Activated CD8-positive, alpha-beta memory T cell treated with anti-CD3 and anti-CD28 coated beads, Interleukin-2, amount 10 ng/mL, durations not matched to agents 7 days and 5 days (primary cell): ENCODE measurements at regions of chr5 and their contacts with region 1.

Region 1: GRCh38 chr5:137660349-137660817 is 75.5 kb downstream of the KLHL3 start:
- DNase-seq: peak; percentile 81
- ATAC-seq: peak; percentile 89
- H3K4me3 Mint-ChIP-seq: no peak overlapping the region
- H3K27ac Mint-ChIP-seq: no peak overlapping the region
- H3K4me1 Mint-ChIP-seq: peaks cover 5% of the 10 kb centered on the region
- H3K27me3 Mint-ChIP-seq: no peaks in the 10 kb centered on the region

Region 2: GRCh38 chr5:137629646-137630045 is 30.7 kb before region 1 on chr5:
- CTCF ChIA-PET with region 1: interaction called, 17 read pairs
- DNase-seq: no peak
- ATAC-seq: peak; percentile 69
- H3K4me3 Mint-ChIP-seq: no peak overlapping the region
- H3K27ac Mint-ChIP-seq: no peak overlapping the region
- H3K4me1 Mint-ChIP-seq: no peaks in the 10 kb centered on the region
- H3K27me3 Mint-ChIP-seq: no peaks in the 10 kb centered on the region

Region 3: GRCh38 chr5:137649228-137649935 is 11.0 kb before region 1 on chr5:
- CTCF ChIA-PET with region 1: no interaction called
- DNase-seq: no peak
- ATAC-seq: no peak
- H3K4me3 Mint-ChIP-seq: no peak overlapping the region
- H3K27ac Mint-ChIP-seq: no peak overlapping the region
- H3K4me1 Mint-ChIP-seq: no peaks in the 10 kb centered on the region
- H3K27me3 Mint-ChIP-seq: no peaks in the 10 kb centered on the region

Region 4: GRCh38 chr5:137695651-137696428 is 35.5 kb after region 1 on chr5:
- CTCF ChIA-PET with region 1: interaction called, 47 read pairs
- DNase-seq: no peak
- ATAC-seq: peak; percentile 48
- H3K4me3 Mint-ChIP-seq: peak overlapping the region; percentile 11
- H3K27ac Mint-ChIP-seq: peak overlapping the region; percentile 84
- H3K4me1 Mint-ChIP-seq: peaks cover 26% of the 10 kb centered on the region
- H3K27me3 Mint-ChIP-seq: no peaks in the 10 kb centered on the region

Region 5: GRCh38 chr5:137735555-137736284 is 75.3 kb after region 1 on chr5 and contains the start of gene KLHL3:
- CTCF ChIA-PET with region 1: interaction called, 163 read pairs
- DNase-seq: peak; percentile 61
- ATAC-seq: peak; percentile 63
- H3K4me3 Mint-ChIP-seq: no peak within 1 kb of the TSS
- H3K27ac Mint-ChIP-seq: no peak within 1 kb of the TSS
- H3K4me1 Mint-ChIP-seq: peaks cover 6% of the 10 kb centered on the region
- H3K27me3 Mint-ChIP-seq: no peaks in the 10 kb centered on the region
- total RNA-seq, gene KLHL3: 3.0 to 5.7 TPM

Region 6: DNA sequence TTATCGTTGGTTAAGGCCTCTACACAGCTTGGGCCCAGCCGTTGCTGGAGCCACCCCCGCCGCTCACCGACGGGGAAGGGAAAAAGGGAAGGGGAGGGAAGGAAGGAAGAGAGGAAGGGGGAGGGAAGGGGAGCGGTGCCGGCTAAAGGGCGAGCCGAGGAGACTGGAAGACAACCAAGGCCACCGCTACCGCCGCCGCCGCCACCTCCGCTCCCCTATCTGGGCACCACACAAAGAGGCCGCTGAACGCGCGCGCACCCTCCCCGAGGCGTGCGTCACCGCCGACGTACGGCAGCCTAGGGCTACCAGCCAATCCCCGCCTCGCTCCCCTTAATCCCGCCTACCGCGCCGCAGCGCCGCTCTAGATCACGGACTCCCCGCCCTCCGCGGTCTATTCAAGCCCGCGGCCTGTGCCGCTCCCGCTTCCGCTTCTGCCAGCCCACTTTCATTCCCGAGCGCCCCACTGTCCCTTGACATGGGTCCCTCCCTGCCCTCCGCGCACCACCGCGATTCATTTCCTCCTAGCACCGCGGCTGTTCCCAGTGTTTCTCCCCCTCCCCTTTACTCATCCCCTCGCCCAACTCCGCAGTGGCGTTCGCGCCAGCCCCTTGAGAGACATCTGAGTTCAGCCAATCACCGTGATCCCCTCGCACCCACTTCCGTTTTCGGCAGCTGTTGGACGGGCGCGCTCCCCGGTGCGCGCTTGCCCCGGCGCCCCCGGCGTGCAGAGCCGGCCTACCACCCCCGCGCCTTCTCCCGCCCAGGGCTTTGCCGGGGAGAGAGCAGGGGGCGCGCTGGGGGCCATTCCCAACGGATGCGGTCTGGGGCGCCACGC is 94.0 kb after region 1 on chr5 and contains the start of gene HNRNPA0:
- CTCF ChIA-PET with region 1: interaction called, 18 read pairs
- DNase-seq: peak; percentile 97
- ATAC-seq: peak; percentile 88
- H3K4me3 Mint-ChIP-seq: peak within 1 kb of the TSS; percentile 96
- H3K27ac Mint-ChIP-seq: peak within 1 kb of the TSS; percentile 100
- H3K4me1 Mint-ChIP-seq: peaks cover 30% of the 10 kb centered on the region
- H3K27me3 Mint-ChIP-seq: no peaks in the 10 kb centered on the region
- total RNA-seq, gene HNRNPA0: 26.0 to 34.0 TPM

Region 7: DNA sequence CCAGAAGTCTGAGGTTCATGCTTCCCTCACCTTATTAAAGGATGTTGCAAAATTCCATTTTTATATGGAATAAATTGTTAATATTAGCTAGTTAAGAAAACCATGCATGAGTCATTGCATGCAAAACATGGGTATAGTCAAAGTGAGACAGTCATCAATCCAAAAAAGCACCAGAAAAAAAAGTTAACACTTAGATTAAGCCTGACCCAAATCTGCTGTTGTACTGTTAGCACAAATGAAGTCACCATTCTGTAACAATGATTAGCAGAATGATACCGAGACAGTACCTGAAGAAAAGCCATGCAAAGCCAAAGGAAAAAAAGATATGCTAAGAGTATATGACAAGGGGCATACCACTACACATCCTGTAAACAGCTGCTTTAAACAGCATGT is 278.4 kb after region 1 on chr5:
- CTCF ChIA-PET with region 1: no interaction called
- DNase-seq: no peak
- ATAC-seq: peak; percentile 27
- H3K4me3 Mint-ChIP-seq: no peak overlapping the region
- H3K27ac Mint-ChIP-seq: no peak overlapping the region
- H3K4me1 Mint-ChIP-seq: peaks cover 16% of the 10 kb centered on the region
- H3K27me3 Mint-ChIP-seq: no peaks in the 10 kb centered on the region

Region 8: GRCh38 chr5:138110266-138110963 is 450.0 kb after region 1 on chr5:
- CTCF ChIA-PET with region 1: no interaction called
- DNase-seq: no peak
- ATAC-seq: no peak
- H3K4me3 Mint-ChIP-seq: no peak overlapping the region
- H3K27ac Mint-ChIP-seq: no peak overlapping the region
- H3K4me1 Mint-ChIP-seq: no peaks in the 10 kb centered on the region
- H3K27me3 Mint-ChIP-seq: peaks cover 21% of the 10 kb centered on the region